ENCODE measurements at regions of chr3 and their contacts with region 1.

Region 1: GRCh38 chr3:50632450-50632849 is 15.5 kb downstream of the MAPKAPK3 start:
- DNase-seq: peak; percentile 28

Region 2: GRCh38 chr3:50652709-50653108 is 20.3 kb after region 1 on chr3:
- CTCF ChIA-PET with region 1: interaction called, 15 read pairs
- POLR2A ChIA-PET with region 1: interaction called, 3 read pairs
- DNase-seq: peak; percentile 31

Measured in HEK293T (cell line).